ENCODE measurements at regions of chr1 and their contacts with region 1.

Region 1: DNA sequence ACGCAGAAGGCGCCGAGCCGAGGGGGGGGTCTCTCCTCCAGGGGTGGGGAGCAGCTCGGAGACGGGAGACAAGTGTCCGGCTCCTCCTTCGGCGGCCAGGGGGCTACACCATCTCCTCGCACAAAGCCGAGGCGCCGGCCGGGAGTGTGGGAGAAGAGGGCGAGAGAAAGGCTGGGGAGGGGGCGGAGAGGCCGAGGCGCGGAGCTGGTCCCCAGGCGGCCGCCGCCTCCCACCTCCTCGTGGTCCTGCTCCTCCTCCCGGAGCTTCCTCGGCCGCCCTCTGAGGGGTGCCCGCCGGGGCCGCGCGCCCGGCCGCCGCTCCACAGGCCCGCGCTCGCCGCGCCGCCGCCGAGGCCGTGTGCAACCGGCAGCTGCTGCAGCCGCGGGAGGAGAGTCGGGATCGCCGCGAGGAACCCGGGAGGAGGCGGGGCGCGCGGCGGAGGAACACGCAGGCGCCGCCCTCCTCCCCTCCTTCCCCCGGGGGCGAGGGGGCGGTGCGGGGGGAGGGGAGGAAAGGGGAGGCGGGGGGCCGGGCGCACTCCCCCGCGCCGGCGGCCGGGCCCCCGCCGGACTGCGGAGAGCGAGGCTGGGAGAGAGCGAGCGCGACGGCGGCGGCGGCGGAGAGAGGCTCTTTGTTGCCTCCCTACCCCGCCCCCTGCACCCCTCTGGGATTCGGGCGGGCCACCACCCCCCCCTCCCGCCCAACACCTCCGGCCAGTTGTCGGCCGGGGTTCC is at the start of gene ENAH:
- DNase-seq: peak; percentile 73
- H3K4me3 ChIP-seq: peak within 1 kb of the TSS; percentile 49 to 99 (median 98)
- H3K27ac ChIP-seq: peak within 1 kb of the TSS; percentile 94
- H3K4me1 ChIP-seq: peaks cover 46% of the 10 kb centered on the region
- H3K27me3 ChIP-seq: no peaks in the 10 kb centered on the region
- CTCF ChIP-seq: no peak
- POLR2A ChIP-seq: peak; percentile 83
- total RNA-seq, gene ENAH: 80.3 and 95.6 TPM in 2 replicates

Region 2: DNA sequence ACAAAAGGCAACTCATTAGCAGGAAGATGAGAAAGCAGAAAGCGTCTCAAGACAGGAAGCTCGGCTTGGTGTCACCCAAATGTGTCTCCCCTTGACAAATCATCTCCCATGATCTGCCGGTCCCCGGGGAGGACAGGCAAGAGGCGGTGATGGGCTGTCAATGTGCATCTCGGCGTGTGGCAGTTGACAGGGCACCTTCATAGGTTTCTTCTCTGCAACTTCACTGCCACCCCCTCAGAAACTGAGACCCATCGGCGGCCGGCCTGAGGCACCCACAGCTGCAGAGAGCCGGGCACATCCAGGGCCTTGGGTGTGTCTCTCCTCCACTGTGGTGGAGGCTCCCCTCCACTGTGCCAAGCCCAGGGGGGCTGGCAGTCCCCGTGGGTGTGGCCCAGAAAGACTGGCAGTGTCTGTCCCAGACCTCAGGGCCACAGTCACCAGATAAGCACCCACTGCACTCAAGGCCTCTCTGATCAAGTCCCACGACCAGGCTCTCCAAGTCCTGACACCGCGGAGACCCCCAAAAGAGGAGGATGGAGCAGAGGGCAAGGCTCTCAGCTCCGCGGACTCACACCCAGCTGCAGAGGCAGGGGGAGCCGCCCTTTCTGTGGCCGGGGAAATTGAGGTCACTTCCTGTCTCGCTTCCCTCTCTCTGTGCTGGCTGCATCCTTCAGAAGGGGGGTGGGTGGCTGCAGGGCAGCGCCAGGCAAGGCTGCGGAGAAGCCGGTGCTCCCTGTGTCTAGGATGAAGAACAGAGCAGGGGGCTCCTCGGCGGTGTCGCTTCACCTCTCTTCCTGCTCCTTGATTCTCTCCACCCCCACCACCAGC is 185.5 kb before region 1 on chr1:
- CTCF ChIA-PET with region 1: no interaction called
- POLR2A ChIA-PET with region 1: no interaction called
- dilution Hi-C with region 1: no loop called
- intact Hi-C with region 1: no loop called
- DNase-seq: peak; percentile 69
- H3K4me3 ChIP-seq: peak overlapping the region in 2 of 3 experiments; percentile 0 to 2
- H3K27ac ChIP-seq: peak overlapping the region; percentile 62
- H3K4me1 ChIP-seq: peaks cover 19% of the 10 kb centered on the region
- H3K27me3 ChIP-seq: no peaks in the 10 kb centered on the region
- CTCF ChIP-seq: no peak
- POLR2A ChIP-seq: peak; percentile 78

Region 3: DNA sequence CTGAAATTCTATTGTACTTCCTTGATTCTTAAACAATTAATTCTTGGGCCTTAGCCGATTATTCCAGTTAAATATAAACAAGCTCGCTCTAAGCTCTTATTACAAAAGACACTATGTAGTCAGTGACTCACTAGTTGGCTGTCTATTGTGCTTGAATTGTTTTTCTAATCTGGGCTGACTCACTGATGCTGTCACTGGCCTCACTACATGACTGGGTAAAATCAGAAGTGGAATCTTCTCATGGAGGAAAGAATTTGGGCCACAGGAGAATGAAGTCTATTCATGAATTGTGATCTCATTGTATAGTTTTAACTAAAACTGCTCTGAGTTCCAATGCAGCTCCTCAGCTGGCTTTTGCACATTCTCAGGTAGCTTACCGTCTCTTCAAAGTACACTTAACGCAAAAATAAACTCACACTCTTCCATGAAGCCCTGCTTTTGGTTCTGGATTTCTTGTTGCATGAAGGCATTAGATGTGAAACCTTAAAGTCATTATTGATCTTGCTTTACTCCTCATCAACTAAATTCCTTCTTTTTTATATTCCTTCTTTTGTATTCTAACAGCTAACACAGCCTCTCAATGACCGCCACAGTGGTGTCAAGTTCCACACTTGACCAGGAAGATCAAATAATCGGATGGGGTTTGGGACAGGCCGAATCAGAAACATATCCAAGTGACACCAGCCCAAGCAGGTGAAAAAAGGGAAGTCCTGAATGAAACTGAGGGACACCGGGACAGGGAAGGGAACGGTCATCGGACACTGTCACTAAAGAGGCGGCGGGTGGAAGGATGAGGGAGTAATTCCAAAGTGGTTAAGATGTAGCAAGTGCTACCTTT is 144.1 kb before region 1 on chr1:
- CTCF ChIA-PET with region 1: interaction called, 3 read pairs
- POLR2A ChIA-PET with region 1: no interaction called
- dilution Hi-C with region 1: no loop called
- intact Hi-C with region 1: loop called (anchors 1 kb)
- DNase-seq: peak; percentile 97
- H3K4me3 ChIP-seq: no peak overlapping the region
- H3K27ac ChIP-seq: peak overlapping the region; percentile 72
- H3K4me1 ChIP-seq: peaks cover 23% of the 10 kb centered on the region
- H3K27me3 ChIP-seq: no peaks in the 10 kb centered on the region
- CTCF ChIP-seq: no peak
- POLR2A ChIP-seq: no peak

Region 4: GRCh38 chr1:225603538-225604354 is 49.1 kb before region 1 on chr1:
- CTCF ChIA-PET with region 1: interaction called, 4 read pairs
- POLR2A ChIA-PET with region 1: no interaction called
- dilution Hi-C with region 1: no loop called
- intact Hi-C with region 1: loop called (anchors 2 kb)
- DNase-seq: peak; percentile 87
- H3K4me3 ChIP-seq: no peak overlapping the region
- H3K27ac ChIP-seq: peak overlapping the region; percentile 39
- H3K4me1 ChIP-seq: peaks cover 27% of the 10 kb centered on the region
- H3K27me3 ChIP-seq: no peaks in the 10 kb centered on the region
- CTCF ChIP-seq: no peak
- POLR2A ChIP-seq: no peak

Region 5: DNA sequence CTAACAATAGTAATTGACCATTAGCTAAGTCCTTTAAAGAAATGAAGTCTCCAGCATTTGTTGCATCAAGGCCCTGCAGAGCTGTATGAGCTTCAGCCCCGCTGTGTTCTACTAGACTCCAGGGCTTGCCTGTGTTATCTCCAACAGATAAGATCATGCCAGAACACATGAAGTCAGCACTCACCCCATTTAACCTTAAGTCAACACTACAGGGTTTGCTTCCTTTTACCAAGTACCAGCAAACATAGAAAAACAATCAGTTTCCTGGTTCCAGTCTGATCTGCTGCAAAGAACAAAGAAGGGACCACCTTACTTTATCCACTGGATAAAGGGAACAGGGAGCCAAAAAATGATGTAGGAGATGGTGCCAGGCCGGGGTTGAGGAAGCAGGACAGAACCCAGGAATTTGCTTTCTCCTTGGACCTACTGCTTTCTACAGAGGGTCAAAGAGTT is 41.3 kb after region 1 on chr1:
- CTCF ChIA-PET with region 1: interaction called, 11 read pairs
- POLR2A ChIA-PET with region 1: interaction called, 4 read pairs
- dilution Hi-C with region 1: no loop called
- intact Hi-C with region 1: loop called (anchors 2 kb)
- DNase-seq: peak; percentile 89
- H3K4me3 ChIP-seq: no peak overlapping the region
- H3K27ac ChIP-seq: peak overlapping the region; percentile 93
- H3K4me1 ChIP-seq: peaks cover 12% of the 10 kb centered on the region
- H3K27me3 ChIP-seq: no peaks in the 10 kb centered on the region
- CTCF ChIP-seq: no peak
- POLR2A ChIP-seq: no peak

Region 6: DNA sequence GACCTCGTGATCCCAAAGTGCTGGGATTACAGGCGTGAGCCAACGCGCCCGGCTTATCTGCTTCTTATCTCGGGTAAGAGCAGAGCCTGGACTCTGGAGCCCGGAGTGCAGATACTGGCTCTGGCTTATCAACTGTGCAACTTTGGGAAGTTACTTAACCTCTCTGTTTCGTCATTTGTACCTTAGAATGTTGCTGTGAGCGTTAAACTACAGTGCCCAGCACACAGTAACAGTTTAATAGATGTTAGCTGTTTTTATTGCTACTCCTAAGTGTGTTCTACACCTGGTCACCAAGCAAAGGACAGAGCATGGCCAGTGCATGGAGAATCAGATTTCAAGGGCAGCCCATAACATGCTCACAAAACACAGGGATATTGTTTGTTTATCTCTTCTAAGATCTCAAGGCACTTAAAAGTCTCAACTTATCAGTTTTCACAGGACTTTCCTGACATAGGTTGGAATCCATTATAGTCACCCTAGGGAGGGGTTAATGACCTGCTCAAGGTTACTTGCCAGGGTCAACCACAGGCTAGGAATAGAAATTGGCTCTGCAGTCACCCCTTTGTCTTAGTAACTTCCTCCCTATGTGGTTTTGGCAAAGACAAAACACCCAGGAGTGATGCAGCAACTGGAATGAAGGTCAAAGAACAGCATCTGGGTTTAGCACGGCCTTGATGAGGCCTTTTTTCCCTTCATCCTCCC is 102.2 kb after region 1 on chr1:
- CTCF ChIA-PET with region 1: interaction called, 3 read pairs
- POLR2A ChIA-PET with region 1: no interaction called
- dilution Hi-C with region 1: no loop called
- intact Hi-C with region 1: loop called (anchors 1 kb)
- DNase-seq: peak; percentile 56
- H3K4me3 ChIP-seq: no peak overlapping the region
- H3K27ac ChIP-seq: peak overlapping the region; percentile 25
- H3K4me1 ChIP-seq: peaks cover 13% of the 10 kb centered on the region
- H3K27me3 ChIP-seq: no peaks in the 10 kb centered on the region
- CTCF ChIP-seq: no peak
- POLR2A ChIP-seq: no peak

Region 7: GRCh38 chr1:225923692-225924555 is 271.0 kb after region 1 on chr1 and contains the start of gene PYCR2:
- CTCF ChIA-PET with region 1: no interaction called
- POLR2A ChIA-PET with region 1: no interaction called
- dilution Hi-C with region 1: no loop called
- intact Hi-C with region 1: loop called (anchors 1 kb)
- DNase-seq: peak; percentile 97
- H3K4me3 ChIP-seq: peak within 1 kb of the TSS; percentile 15 to 69 (median 59)
- H3K27ac ChIP-seq: peak within 1 kb of the TSS; percentile 69
- H3K4me1 ChIP-seq: peaks cover 19% of the 10 kb centered on the region
- H3K27me3 ChIP-seq: no peaks in the 10 kb centered on the region
- CTCF ChIP-seq: no peak
- POLR2A ChIP-seq: peak; percentile 94
- total RNA-seq, gene PYCR2: 60.4 and 64.6 TPM in 2 replicates

Region 8: GRCh38 chr1:226083302-226084101 is 430.6 kb after region 1 on chr1:
- CTCF ChIA-PET with region 1: no interaction called
- POLR2A ChIA-PET with region 1: no interaction called
- dilution Hi-C with region 1: no loop called
- intact Hi-C with region 1: no loop called
- DNase-seq: peak; percentile 78
- H3K4me3 ChIP-seq: peak overlapping the region; percentile 58 to 87 (median 69)
- H3K27ac ChIP-seq: peak overlapping the region; percentile 20
- H3K4me1 ChIP-seq: peaks cover 5% of the 10 kb centered on the region
- H3K27me3 ChIP-seq: no peaks in the 10 kb centered on the region
- CTCF ChIP-seq: no peak
- POLR2A ChIP-seq: peak; percentile 53

Region 9: GRCh38 chr1:226162898-226163297 is 510.0 kb after region 1 on chr1:
- CTCF ChIA-PET with region 1: no interaction called
- POLR2A ChIA-PET with region 1: no interaction called
- dilution Hi-C with region 1: no loop called
- intact Hi-C with region 1: no loop called
- DNase-seq: no peak
- H3K4me3 ChIP-seq: no peak overlapping the region
- H3K27ac ChIP-seq: no peak overlapping the region
- H3K4me1 ChIP-seq: no peaks in the 10 kb centered on the region
- H3K27me3 ChIP-seq: no peaks in the 10 kb centered on the region
- CTCF ChIP-seq: no peak
- POLR2A ChIP-seq: no peak

Region 10: DNA sequence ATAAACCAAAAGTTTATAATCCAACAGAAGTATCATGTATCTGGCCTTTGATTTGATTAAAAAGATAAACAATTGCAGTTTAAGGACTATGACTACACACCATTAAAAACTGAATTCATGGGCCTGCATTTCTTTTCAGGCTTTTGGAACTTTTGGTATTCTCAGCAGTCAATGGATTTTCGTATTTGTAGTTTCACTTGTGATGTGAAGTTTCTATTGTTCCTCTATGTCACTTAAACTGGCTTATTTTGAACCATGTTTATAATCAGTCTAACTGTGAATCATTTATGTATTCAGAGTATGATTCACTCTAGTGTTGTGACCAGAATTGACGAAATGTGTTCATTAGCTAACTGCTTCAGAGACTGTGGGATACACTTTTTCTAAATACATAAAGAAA is 1420.1 kb after region 1 on chr1:
- CTCF ChIA-PET with region 1: no interaction called
- POLR2A ChIA-PET with region 1: no interaction called
- dilution Hi-C with region 1: no loop called
- intact Hi-C with region 1: no loop called
- DNase-seq: peak; percentile 13
- H3K4me3 ChIP-seq: no peak overlapping the region
- H3K27ac ChIP-seq: no peak overlapping the region
- H3K4me1 ChIP-seq: no peaks in the 10 kb centered on the region
- H3K27me3 ChIP-seq: no peaks in the 10 kb centered on the region
- CTCF ChIP-seq: no peak
- POLR2A ChIP-seq: no peak